ENCODE measurements at regions of chr9 and their contacts with region 1.

Region 1: GRCh38 chr9:78820855-78821822 is 524.2 kb downstream of the PSAT1 start:
- DNase-seq: peak in 5 of 9 donors; percentile 2 to 33 (median 12)
- ATAC-seq: peak; percentile 44
- H3K4me3 ChIP-seq: no peak overlapping the region
- H3K4me3 Mint-ChIP-seq: peak overlapping the region; percentile 43 to 81 (median 62)
- H3K27ac ChIP-seq: no peak overlapping the region
- H3K27ac Mint-ChIP-seq: no peak overlapping the region
- H3K4me1 ChIP-seq: no peaks in the 10 kb centered on the region
- H3K4me1 Mint-ChIP-seq: peaks cover 0 to 6% (median 5%) of the 10 kb centered on the region in 7 donors
- H3K27me3 ChIP-seq: no peaks in the 10 kb centered on the region
- H3K27me3 Mint-ChIP-seq: no peaks in the 10 kb centered on the region

Region 2: DNA sequence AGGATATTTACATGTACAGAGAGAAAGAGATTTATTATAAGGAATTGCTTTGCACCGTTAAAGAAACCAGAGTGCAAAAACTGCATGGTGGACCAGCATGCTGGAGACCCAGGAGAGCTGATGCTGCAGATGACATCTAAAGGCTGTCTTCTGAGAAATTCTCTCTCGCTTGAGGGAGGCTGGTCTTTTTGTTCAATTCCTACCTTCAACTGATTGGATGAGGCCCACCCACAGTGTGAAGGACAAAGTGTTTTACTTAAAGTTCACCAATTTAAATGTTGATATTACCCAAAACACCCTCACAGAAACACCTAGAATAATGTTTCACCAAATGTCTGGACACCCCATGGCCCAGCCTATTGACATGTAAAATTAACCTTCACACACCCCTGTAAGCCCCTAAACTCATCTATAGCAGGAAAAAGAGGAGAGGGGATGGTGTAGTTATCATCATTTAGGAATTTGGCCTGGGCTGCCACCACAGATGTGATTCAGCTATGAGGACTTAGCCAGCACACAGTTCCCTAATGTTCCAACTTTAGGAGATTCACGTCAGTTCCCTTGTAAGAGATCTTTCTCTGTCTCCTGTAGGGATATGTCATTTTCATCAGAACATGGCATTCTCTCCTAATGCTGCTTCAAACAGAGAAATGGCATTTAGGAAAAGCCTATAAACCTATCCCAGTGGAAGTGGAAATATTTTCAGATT is 392.4 kb after region 1 on chr9:
- CTCF ChIA-PET with region 1: no interaction called
- POLR2A ChIA-PET with region 1: no interaction called
- intact Hi-C with region 1: no loop called
- DNase-seq: no peak
- ATAC-seq: no peak
- H3K4me3 ChIP-seq: no peak overlapping the region
- H3K4me3 Mint-ChIP-seq: no peak overlapping the region
- H3K27ac ChIP-seq: no peak overlapping the region
- H3K27ac Mint-ChIP-seq: no peak overlapping the region
- H3K4me1 ChIP-seq: no peaks in the 10 kb centered on the region
- H3K4me1 Mint-ChIP-seq: no peaks in the 10 kb centered on the region
- H3K27me3 ChIP-seq: no peaks in the 10 kb centered on the region
- H3K27me3 Mint-ChIP-seq: peaks cover 0 to 9% (median 5%) of the 10 kb centered on the region in 5 donors

Region 3: DNA sequence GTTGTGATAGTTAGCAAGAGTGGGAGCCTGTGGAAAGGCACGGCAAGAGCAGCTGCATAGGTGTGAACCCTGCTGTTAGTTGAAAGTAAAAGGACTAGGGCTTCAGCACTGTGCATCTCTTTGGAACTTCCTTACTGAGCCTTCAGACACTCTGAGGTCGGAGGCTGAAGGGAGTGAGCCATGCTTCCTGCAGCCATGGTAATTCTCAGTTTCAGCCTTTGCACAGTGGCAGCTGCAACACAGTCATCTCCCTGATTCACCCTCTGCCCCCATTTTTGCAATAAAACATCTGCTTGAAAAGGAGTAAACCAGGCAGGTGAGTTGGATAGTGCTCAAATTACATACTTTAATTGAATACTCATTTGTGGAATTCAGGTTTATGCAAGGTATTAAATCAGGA is 744.1 kb after region 1 on chr9:
- CTCF ChIA-PET with region 1: no interaction called
- POLR2A ChIA-PET with region 1: no interaction called
- intact Hi-C with region 1: loop called in 1 of 2 experiments (anchors 5 kb)
- DNase-seq: no peak
- ATAC-seq: no peak
- H3K4me3 ChIP-seq: no peak overlapping the region
- H3K4me3 Mint-ChIP-seq: no peak overlapping the region
- H3K27ac ChIP-seq: no peak overlapping the region
- H3K27ac Mint-ChIP-seq: no peak overlapping the region
- H3K4me1 ChIP-seq: no peaks in the 10 kb centered on the region
- H3K4me1 Mint-ChIP-seq: peaks cover 0 to 22% (median 6%) of the 10 kb centered on the region in 7 donors
- H3K27me3 ChIP-seq: no peaks in the 10 kb centered on the region
- H3K27me3 Mint-ChIP-seq: peaks cover 4 to 38% (median 11%) of the 10 kb centered on the region in 5 donors

Measured in naive thymus-derived CD4-positive, alpha-beta T cell (primary cell).